Activated CD4-positive, alpha-beta memory T cell treated with anti-CD3 and anti-CD28 coated beads for 36 hours (primary cell): ENCODE measurements at regions of chr3 and their contacts with region 1.

Region 1: GRCh38 chr3:70064194-70064779 is 64.8 kb downstream of the SAMMSON start:
- DNase-seq: no peak
- H3K4me3 Mint-ChIP-seq: no peak overlapping the region
- H3K27ac Mint-ChIP-seq: no peak overlapping the region
- H3K4me1 Mint-ChIP-seq: no peaks in the 10 kb centered on the region
- H3K27me3 Mint-ChIP-seq: no peaks in the 10 kb centered on the region

Region 2: DNA sequence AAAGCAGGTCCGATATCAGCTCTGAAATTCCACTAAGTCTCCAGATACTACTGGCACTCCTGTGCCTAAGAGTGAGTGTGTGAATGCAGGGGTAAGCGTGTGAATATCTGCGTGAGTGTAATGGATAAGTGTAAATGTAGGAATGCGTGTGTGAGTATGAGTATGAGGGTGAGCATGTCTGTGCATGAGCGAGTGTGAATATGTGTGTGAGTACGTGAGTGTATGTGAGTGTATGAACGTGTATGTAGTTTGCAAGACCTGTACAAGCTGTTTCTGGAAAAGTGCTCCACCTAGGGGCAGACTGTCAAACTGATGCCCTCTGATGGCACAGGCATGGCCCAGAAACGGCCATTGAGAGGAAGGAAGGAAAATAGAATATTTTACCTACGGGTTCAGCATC is 654.0 kb before region 1 on chr3:
- CTCF ChIA-PET with region 1: no interaction called
- POLR2A ChIA-PET with region 1: no interaction called
- intact Hi-C with region 1: no loop called
- DNase-seq: peak; percentile 81
- H3K4me3 Mint-ChIP-seq: no peak overlapping the region
- H3K27ac Mint-ChIP-seq: no peak overlapping the region
- H3K4me1 Mint-ChIP-seq: peaks cover 4% of the 10 kb centered on the region
- H3K27me3 Mint-ChIP-seq: peaks cover 3% of the 10 kb centered on the region

Region 3: DNA sequence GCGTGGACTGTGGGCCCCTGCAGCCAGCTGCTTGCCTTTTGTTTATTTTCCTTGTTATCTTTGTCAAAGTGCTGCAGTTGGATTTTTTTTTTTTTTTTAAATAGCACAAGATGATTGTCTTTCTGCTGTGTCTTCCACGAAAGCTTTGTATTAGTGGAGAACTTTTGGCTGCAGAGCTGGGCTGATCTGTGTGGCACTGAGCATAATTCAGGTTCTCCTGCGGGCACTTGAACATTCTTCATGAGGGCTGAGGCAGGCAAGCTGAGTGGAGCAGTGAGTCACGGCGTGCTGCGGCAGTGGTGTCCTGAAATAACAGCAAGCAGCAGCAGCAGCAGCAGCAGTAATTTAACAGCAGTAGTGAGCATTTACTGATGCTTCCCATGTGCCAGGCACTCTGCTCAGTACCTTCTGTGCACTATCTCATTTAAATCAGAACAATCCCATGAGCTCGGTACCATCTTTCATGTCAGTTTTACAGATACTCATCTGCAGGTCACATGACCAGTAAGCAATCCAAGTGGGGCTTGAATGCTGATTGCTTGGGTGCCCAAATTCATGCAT is 279.3 kb before region 1 on chr3:
- CTCF ChIA-PET with region 1: no interaction called
- POLR2A ChIA-PET with region 1: no interaction called
- intact Hi-C with region 1: no loop called
- DNase-seq: no peak
- H3K4me3 Mint-ChIP-seq: no peak overlapping the region
- H3K27ac Mint-ChIP-seq: no peak overlapping the region
- H3K4me1 Mint-ChIP-seq: no peaks in the 10 kb centered on the region
- H3K27me3 Mint-ChIP-seq: no peaks in the 10 kb centered on the region

Region 4: DNA sequence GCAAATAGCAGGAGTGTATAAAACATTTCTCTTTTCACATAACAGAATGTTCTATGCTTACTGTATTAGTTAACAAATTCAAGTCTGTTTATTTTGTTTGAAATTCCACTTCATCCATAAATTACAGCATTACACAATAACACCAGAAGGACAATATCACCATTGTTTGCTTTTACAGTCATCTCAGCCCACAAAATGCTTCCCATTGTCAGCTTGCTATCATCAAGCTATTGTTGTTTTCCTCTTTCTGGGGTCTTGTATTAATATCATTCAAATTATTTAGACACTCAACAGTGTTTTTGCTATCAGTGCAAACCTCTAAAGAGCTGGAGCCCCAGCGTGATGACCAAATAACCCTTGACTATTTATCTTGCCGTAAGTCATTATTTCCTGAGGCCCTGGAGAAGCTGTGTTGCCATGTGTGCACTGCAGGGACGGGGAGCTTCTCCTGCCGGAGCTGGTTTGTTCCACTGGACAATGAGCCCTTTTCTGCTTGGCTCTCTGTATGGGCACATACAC is 63.7 kb before region 1 on chr3:
- CTCF ChIA-PET with region 1: no interaction called
- POLR2A ChIA-PET with region 1: no interaction called
- intact Hi-C with region 1: no loop called
- DNase-seq: no peak
- H3K4me3 Mint-ChIP-seq: no peak overlapping the region
- H3K27ac Mint-ChIP-seq: no peak overlapping the region
- H3K4me1 Mint-ChIP-seq: no peaks in the 10 kb centered on the region
- H3K27me3 Mint-ChIP-seq: no peaks in the 10 kb centered on the region

Region 5: GRCh38 chr3:70358978-70359580 is 294.8 kb after region 1 on chr3:
- CTCF ChIA-PET with region 1: interaction called, 5 read pairs
- POLR2A ChIA-PET with region 1: no interaction called
- intact Hi-C with region 1: loop called (anchors 1 kb)
- DNase-seq: no peak
- H3K4me3 Mint-ChIP-seq: no peak overlapping the region
- H3K27ac Mint-ChIP-seq: no peak overlapping the region
- H3K4me1 Mint-ChIP-seq: no peaks in the 10 kb centered on the region
- H3K27me3 Mint-ChIP-seq: no peaks in the 10 kb centered on the region

Region 6: DNA sequence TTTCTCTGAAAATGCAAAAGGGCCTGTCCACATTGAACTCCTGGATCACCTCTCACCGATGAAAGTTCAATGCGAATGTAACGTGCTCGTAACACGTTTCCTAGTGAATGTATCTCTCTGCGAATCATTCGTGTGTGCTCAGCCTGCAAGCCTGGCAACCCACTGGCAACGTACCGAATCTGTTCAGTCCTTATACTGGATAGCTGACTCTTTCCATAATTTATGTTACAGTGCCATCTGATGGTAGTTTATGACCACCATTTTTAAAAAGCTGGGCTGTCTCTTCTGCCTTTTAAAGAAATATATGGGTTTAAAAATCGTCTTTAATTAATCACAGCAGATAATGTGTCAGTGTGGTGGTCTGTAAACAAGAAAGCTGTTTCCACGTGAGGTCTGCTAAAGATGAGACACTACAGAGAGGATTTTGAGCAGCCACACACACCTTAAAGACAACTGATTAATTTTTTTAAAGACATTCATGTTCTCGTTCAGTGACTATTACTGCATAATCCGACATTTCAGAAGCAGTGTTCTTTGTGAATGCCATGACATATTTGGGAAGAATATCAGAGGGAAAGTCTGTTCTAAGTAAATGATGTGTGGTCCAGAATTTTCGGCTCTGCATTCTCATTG is 1588.6 kb after region 1 on chr3:
- CTCF ChIA-PET with region 1: no interaction called
- POLR2A ChIA-PET with region 1: no interaction called
- intact Hi-C with region 1: loop called (anchors 10 kb)
- DNase-seq: peak; percentile 50
- H3K4me3 Mint-ChIP-seq: peak overlapping the region; percentile 16
- H3K27ac Mint-ChIP-seq: no peak overlapping the region
- H3K4me1 Mint-ChIP-seq: peaks cover 6% of the 10 kb centered on the region
- H3K27me3 Mint-ChIP-seq: no peaks in the 10 kb centered on the region